T-cell (primary cell): ENCODE measurements at regions of chr3 and their contacts with region 1.

Region 1: DNA sequence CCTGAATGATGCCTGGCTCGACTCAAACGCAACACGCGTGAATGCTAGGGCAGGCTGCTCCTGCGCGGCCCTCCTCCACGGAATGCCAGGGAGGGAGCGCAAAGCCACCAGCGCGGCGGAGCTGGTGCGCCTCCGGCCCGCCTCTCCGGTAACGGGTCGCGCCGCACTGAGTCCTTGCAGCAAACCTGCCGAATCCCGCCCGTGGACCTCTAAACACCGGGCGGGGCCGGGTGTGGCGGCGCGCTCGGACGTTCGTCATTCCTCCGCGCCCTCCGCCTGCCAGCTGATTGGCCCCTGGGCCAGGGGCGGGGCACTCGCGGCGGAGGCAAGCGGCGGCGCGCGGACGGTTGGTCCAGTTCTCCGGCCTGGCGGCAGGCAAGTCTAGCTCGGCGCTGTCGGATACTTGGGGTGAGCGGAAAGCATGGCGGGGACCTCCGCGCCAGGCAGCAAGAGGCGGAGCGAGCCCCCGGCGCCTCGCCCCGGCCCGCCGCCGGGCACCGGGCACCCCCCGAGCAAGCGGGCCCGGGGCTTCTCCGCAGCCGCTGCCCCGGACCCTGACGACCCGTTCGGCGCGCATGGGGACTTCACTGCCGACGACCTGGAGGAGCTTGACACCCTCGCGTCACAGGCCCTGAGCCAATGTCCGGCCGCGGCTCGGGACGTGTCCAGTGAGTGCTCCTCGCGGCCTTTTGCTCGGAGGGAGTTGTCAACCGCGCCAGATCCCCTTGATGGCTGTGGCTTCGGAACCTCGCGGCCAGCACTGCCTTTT is at the start of gene ATRIP:
- DNase-seq: peak; percentile 60 to 91 (median 77)
- ATAC-seq: peak; percentile 98
- H3K4me3 ChIP-seq: peak within 1 kb of the TSS; percentile 83 to 90
- H3K4me3 Mint-ChIP-seq: peak within 1 kb of the TSS; percentile 83 to 97 (median 84)
- H3K27ac ChIP-seq: peak within 1 kb of the TSS; percentile 74
- H3K27ac Mint-ChIP-seq: peak within 1 kb of the TSS; percentile 85 to 86
- H3K4me1 ChIP-seq: peaks cover 16 to 30% of the 10 kb centered on the region in 2 experiments
- H3K4me1 Mint-ChIP-seq: peaks cover 39 to 49% (median 45%) of the 10 kb centered on the region in 3 donors
- H3K27me3 ChIP-seq: no peaks in the 10 kb centered on the region
- H3K27me3 Mint-ChIP-seq: no peaks in the 10 kb centered on the region
- total RNA-seq, gene ATRIP: 7.8 to 14.9 (median 12.8) TPM

Region 2: DNA sequence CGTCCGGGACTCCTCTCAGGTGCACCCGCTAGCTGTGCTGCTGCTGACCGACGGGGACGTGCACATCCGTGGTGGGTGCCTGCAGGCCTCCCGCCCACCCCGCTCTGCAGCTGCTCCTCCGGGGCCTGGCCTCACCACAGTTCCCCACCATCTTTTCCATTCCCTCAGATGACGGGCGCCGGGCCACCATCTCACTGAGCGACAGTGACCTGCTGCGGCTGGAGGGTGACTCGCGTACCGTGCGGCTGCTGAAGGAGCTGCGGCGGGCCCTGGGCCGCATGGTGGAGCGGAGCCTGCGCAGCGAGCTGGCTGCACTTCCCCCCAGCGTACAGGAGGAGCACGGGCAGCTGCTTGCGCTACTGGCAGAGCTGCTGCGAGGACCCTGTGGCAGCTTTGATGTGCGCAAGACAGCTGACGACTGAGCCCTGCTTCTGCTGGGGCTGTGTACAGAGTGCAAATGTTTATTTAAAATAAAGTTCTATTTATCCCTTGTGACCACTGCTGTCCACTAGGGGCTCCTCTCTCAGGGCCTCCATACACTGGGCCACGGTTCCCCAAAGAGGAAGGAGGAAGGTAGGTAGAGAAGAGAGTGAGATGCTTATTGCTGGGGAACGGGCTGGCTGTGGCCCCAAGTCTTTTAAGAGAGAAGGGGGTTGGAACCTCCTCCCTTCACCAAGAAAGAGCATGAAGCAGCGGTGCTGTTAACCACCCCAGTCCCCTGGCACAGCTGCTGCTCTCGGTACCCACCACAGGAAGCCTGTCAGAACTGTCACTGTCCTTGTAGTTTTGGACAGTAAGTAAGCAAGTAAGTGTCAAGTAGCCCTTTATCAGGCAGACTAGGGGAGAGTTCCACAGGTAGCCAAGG is 596.7 kb before region 1 on chr3:
- CTCF ChIA-PET with region 1: no interaction called
- POLR2A ChIA-PET with region 1: interaction called in 1 of 2 experiments, 10 read pairs
- DNase-seq: no peak
- ATAC-seq: peak in 2 of 4 experiments; percentile 25 to 30
- H3K4me3 ChIP-seq: no peak overlapping the region
- H3K4me3 Mint-ChIP-seq: no peak overlapping the region
- H3K27ac ChIP-seq: no peak overlapping the region
- H3K27ac Mint-ChIP-seq: no peak overlapping the region
- H3K4me1 ChIP-seq: no peaks in the 10 kb centered on the region
- H3K4me1 Mint-ChIP-seq: no peaks in the 10 kb centered on the region
- H3K27me3 ChIP-seq: no peaks in the 10 kb centered on the region
- H3K27me3 Mint-ChIP-seq: no peaks in the 10 kb centered on the region

Region 3: DNA sequence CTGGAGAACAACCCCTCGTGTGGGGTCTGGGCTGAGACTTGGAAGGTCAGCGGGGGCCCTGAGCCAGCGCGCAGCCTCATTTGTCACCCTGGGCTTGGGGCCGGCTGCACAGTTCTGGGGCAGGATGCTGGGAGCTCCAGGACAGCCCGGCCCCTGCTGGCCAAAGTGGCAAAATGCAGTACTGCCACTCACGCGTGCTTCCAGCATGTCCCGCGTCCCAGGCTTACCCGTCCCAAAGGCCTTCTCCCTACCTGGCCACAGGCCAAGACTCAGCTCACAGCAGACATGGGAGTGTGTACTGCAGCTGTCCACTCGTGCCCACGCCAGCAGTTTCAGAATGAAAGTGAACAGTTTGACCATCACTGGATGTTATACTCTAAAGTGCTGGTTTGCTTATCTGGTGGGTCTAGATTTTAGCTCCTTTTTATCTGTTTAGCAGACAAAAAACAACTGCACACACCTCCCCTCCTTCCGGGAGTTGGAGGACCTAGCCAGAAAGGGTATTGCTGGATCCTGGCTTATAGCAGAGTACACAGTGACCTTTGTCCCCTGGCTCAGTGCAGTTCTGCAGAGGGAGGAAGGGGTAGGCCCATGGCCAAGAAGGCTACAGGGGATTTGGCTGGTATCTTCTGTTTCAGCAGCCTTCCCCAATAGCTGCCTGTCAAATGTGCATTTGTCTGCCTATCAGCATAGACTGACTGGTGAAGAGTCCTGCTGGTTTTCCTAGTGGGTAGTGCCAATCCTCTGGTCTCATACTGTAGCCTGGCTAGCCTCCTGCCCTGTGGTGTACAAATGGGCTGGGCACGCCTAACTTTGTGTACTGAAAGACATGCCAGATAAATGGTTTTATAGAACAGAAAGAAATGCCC is 293.6 kb after region 1 on chr3:
- CTCF ChIA-PET with region 1: no interaction called
- POLR2A ChIA-PET with region 1: no interaction called
- DNase-seq: peak in 34 of 35 experiments; percentile 4 to 63 (median 36)
- ATAC-seq: peak; percentile 83 to 93 (median 86)
- H3K4me3 ChIP-seq: no peak overlapping the region
- H3K4me3 Mint-ChIP-seq: no peak overlapping the region
- H3K27ac ChIP-seq: no peak overlapping the region
- H3K27ac Mint-ChIP-seq: no peak overlapping the region
- H3K4me1 ChIP-seq: peaks cover 0 to 7% of the 10 kb centered on the region in 2 experiments
- H3K4me1 Mint-ChIP-seq: peaks cover 0 to 3% (median 3%) of the 10 kb centered on the region in 3 donors
- H3K27me3 ChIP-seq: no peaks in the 10 kb centered on the region
- H3K27me3 Mint-ChIP-seq: no peaks in the 10 kb centered on the region

Region 4: GRCh38 chr3:48855681-48856447 is 409.3 kb after region 1 on chr3:
- CTCF ChIA-PET with region 1: no interaction called
- POLR2A ChIA-PET with region 1: no interaction called
- DNase-seq: no peak
- ATAC-seq: no peak
- H3K4me3 ChIP-seq: no peak overlapping the region
- H3K4me3 Mint-ChIP-seq: no peak overlapping the region
- H3K27ac ChIP-seq: no peak overlapping the region
- H3K27ac Mint-ChIP-seq: no peak overlapping the region
- H3K4me1 ChIP-seq: no peaks in the 10 kb centered on the region
- H3K4me1 Mint-ChIP-seq: no peaks in the 10 kb centered on the region
- H3K27me3 ChIP-seq: no peaks in the 10 kb centered on the region
- H3K27me3 Mint-ChIP-seq: no peaks in the 10 kb centered on the region